Sciatic nerve (tissue), 2 donors: ENCODE measurements at regions of chrX and their contacts with region 1.

Region 1: GRCh38 chrX:121084903-121085611 is 37.6 kb downstream of the GLUD2 start:
- DNase-seq: no peak
- ATAC-seq: no peak

Region 2: DNA sequence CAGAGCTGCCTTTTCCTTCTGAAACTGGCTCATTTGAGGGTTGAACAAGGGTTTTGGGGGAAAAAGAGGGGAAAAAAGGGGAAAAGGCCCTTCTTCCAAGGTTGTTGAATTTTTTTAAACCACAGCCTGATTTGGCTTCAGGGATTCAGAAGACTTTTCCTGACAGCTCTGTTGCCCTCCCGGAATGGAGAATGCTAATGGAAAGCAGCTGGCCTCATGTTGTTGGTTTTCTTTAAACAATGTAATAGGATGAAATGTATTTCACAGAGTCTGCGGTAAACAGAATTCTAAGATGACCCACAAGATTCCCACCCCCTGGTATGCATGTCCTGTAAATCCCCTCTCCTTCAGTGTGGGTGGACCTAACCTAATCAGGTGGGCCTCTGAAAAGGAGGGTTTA is 1954.1 kb before region 1 on chrX:
- intact Hi-C with region 1: loop called (anchors 10 kb)
- DNase-seq: no peak
- ATAC-seq: no peak

Region 3: GRCh38 chrX:122014531-122014930 is 929.5 kb after region 1 on chrX:
- intact Hi-C with region 1: no loop called
- DNase-seq: no peak
- ATAC-seq: no peak